Transverse colon (tissue), 4 donors: ENCODE measurements at regions of chr4 and their contacts with region 1.

Region 1: GRCh38 chr4:102826890-102827673 is at the start of gene UBE2D3:
- DNase-seq: peak; percentile 96
- H3K4me3 ChIP-seq: peak within 1 kb of the TSS; percentile 86 to 98 (median 95)
- H3K27ac ChIP-seq: peak within 1 kb of the TSS; percentile 99 to 100 (median 100)
- H3K4me1 ChIP-seq: peaks cover 9 to 40% (median 34%) of the 10 kb centered on the region in 4 donors
- H3K27me3 ChIP-seq: no peaks in the 10 kb centered on the region
- CTCF ChIP-seq: peak in 1 of 5 experiments; percentile 19
- EP300 ChIP-seq: peak; percentile 12
- POLR2A ChIP-seq: peak; percentile 92
- total RNA-seq, gene UBE2D3: 154 to 316 (median 267) TPM

Region 2: GRCh38 chr4:102868781-102869568 is 41.9 kb after region 1 on chr4 and contains the start of gene CISD2:
- in situ Hi-C with region 1: no loop called
- intact Hi-C with region 1: loop called (anchors 2 kb)
- DNase-seq: peak; percentile 94
- H3K4me3 ChIP-seq: peak within 1 kb of the TSS; percentile 61 to 76 (median 69)
- H3K27ac ChIP-seq: peak within 1 kb of the TSS; percentile 90 to 98 (median 96)
- H3K4me1 ChIP-seq: peaks cover 0 to 30% (median 13%) of the 10 kb centered on the region in 4 donors
- H3K27me3 ChIP-seq: no peaks in the 10 kb centered on the region
- CTCF ChIP-seq: peak in 2 of 5 experiments; percentile 12 to 45
- EP300 ChIP-seq: no peak
- POLR2A ChIP-seq: peak; percentile 80
- total RNA-seq, gene CISD2: 1.2 to 13.9 (median 10.8) TPM

Region 3: GRCh38 chr4:103019308-103020124 is 192.4 kb after region 1 on chr4 and contains the start of gene SLC9B1:
- in situ Hi-C with region 1: loop called in 1 of 4 experiments (anchors 25 kb)
- intact Hi-C with region 1: no loop called
- DNase-seq: peak; percentile 98
- H3K4me3 ChIP-seq: peak within 1 kb of the TSS; percentile 9 to 55 (median 32)
- H3K27ac ChIP-seq: peak within 1 kb of the TSS; percentile 89 to 93 (median 90)
- H3K4me1 ChIP-seq: peaks cover 3 to 13% (median 7%) of the 10 kb centered on the region in 4 donors
- H3K27me3 ChIP-seq: no peaks in the 10 kb centered on the region
- CTCF ChIP-seq: peak in 2 of 5 experiments; percentile 2 to 24
- EP300 ChIP-seq: peak; percentile 66
- POLR2A ChIP-seq: peak; percentile 88
- total RNA-seq, gene SLC9B1: 0.41 to 0.79 TPM in 2 of 4 donors, not detected in the others